Caco-2 (cell line): ENCODE measurements at regions of chr9 and their contacts with region 1.

Region 1: GRCh38 chr9:8560560-8561525 is 761.3 kb upstream of the DMAC1 start:
- DNase-seq: peak in 1 of 2 experiments; percentile 40
- H3K4me3 ChIP-seq: no peak overlapping the region
- H3K4me3 Mint-ChIP-seq: peak overlapping the region; percentile 37
- H3K27ac Mint-ChIP-seq: peak overlapping the region; percentile 97
- H3K4me1 ChIP-seq: peaks cover 25% of the 10 kb centered on the region
- H3K4me1 Mint-ChIP-seq: peaks cover 15% of the 10 kb centered on the region
- H3K27me3 ChIP-seq: no peaks in the 10 kb centered on the region
- H3K27me3 Mint-ChIP-seq: no peaks in the 10 kb centered on the region
- CTCF ChIP-seq: no peak

Region 2: DNA sequence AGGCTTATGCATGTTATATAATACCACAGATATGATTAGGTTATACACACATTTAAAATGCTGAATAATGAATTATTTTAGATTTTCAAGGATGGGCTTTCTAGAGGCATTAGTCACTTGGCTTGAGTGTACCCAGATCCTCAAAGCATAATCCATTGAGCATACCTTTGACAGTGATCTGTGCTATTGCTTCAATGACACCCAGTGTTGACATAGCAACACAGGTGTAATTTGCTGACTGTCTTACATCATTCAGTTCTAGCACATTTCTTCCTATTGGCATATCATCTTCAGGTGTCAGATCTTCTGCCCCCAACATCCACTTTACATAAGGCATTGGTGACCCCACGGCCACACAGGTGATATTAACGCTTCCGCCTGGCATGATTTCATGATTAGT is 39.7 kb before region 1 on chr9:
- CTCF ChIA-PET with region 1: no interaction called
- POLR2A ChIA-PET with region 1: no interaction called
- intact Hi-C with region 1: loop called (anchors 2 kb)
- DNase-seq: peak in 1 of 2 experiments; percentile 33
- H3K4me3 ChIP-seq: no peak overlapping the region
- H3K4me3 Mint-ChIP-seq: no peak overlapping the region
- H3K27ac Mint-ChIP-seq: no peak overlapping the region
- H3K4me1 ChIP-seq: no peaks in the 10 kb centered on the region
- H3K4me1 Mint-ChIP-seq: no peaks in the 10 kb centered on the region
- H3K27me3 ChIP-seq: no peaks in the 10 kb centered on the region
- H3K27me3 Mint-ChIP-seq: no peaks in the 10 kb centered on the region
- CTCF ChIP-seq: no peak